ENCODE measurements at regions of chrX and their contacts with region 1.

Region 1: GRCh38 chrX:47193475-47194193 is at the start of gene UBA1:
- DNase-seq: peak; percentile 95
- CTCF ChIP-seq: peak; percentile 83

Region 2: DNA sequence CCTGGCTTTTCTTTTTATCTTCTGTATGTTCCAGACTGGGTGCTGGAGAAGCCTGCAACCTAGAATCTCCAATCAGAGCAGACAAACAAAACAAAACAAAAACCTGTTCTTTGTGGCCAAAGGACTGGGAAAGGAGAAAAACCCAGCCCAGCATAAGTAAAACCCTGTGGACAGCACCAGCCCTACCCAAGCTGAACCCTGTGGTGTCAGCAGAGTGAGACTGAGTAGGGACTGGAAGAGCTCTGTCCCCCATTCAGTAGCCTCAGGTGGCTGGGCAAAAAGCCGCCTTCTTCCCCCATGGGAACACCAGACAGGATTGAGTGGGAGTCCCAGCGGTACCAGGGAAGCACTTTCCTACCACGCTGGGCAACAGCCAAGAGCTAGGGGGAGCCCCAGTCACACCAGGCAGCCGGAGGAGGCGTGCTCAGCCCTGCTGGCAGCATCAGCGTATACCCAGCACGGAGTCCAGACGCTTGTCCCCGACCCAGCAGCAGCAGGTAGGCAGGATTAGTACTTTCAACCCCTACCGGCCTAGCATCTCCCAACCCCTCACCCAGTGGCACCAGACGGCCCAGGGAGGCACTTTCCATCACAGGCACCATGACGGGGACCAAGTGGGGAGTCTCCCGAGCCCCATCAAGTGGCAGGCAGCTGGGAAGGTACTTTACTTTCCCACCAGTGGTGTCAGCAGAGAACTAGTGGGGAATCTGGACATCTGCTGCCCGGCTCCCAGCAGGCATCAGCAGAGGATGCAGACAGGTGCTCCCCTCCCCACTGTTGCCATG is 290.0 kb before region 1 on chrX:
- in situ Hi-C with region 1: no loop called
- DNase-seq: peak; percentile 62
- CTCF ChIP-seq: peak; percentile 67

Region 3: DNA sequence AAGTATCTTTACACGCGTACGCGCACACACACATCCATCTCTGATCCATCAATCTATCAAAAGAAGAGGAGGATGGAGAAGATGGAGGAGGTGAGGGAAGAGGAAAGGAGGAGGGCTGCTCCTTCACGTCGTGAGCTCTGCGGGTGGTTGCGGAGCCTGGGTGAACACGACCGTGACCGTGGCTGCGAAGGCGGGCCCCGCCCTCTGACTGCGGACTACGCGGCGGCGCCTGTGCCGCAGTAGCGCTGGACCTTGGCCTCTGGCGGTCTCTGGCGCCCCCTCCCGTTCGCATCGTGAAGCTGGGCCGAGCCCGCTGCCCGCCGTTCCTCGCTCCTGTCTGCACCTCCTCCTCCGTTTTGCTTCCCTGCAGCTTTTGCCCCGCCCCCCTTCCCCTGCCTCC is 329.7 kb after region 1 on chrX:
- in situ Hi-C with region 1: loop called (anchors 25 kb)
- DNase-seq: peak; percentile 79
- CTCF ChIP-seq: peak; percentile 85

Measured in GM13977 (cell line).